ENCODE measurements at regions of chr11 and their contacts with region 1.

Region 1: DNA sequence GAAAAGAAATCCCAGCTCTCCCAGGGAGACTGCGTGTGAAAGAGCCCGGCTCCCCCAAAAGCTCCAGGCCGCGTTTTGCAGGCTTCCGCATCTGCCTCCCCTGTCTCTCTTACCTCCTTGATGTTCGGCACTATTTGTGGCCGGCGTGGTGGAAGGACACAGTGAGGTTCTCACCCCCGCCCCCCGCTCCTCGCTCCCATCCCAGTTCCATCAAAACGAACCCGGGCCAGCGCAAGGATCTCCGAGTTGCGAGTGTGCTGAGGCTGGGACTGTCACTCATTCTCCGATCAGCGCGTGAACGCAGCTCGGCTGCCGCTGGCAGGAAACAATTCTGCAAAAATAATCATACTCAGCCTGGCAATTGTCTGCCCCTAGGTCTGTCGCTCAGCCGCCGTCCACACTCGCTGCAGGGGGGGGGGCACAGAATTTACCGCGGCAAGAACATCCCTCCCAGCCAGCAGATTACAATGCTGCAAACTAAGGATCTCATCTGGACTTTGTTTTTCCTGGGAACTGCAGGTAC is at the start of gene NCAM1:
- DNase-seq: peak; percentile 82 to 95 (median 95)
- ATAC-seq: peak; percentile 75 to 79
- H3K4me3 ChIP-seq: peak within 1 kb of the TSS; percentile 92
- H3K27ac ChIP-seq: peak within 1 kb of the TSS; percentile 75
- H3K4me1 ChIP-seq: no peaks in the 10 kb centered on the region
- H3K27me3 ChIP-seq: no peaks in the 10 kb centered on the region
- total RNA-seq, gene NCAM1: 191 to 303 (median 223) TPM

Region 2: DNA sequence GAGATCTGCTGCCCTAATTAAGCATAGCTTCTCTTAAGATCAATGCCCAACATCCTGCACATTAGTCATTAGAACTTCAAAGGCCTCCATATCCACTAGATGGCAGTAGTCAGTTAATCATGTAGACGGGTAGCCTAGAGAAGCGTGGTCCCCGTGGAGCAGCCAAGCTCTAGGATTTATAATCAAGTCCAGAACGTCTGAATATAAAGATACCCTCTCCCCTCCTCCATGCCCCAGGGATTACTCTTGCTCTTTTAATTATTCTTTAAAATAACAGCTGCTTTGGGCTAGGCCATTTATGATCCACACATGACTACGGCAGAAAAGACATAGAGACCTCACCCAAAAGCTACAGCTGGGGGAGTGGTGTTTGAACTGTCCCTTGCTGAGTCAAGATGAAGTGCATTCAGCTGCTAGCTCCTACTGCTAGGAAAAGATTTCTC is 372.9 kb before region 1 on chr11:
- intact Hi-C with region 1: loop called in 1 of 4 experiments (anchors 10 kb)
- DNase-seq: peak; percentile 61 to 85 (median 73)
- ATAC-seq: peak; percentile 86 to 89
- H3K4me3 ChIP-seq: no peak overlapping the region
- H3K27ac ChIP-seq: no peak overlapping the region
- H3K4me1 ChIP-seq: no peaks in the 10 kb centered on the region
- H3K27me3 ChIP-seq: no peaks in the 10 kb centered on the region

Region 3: GRCh38 chr11:112784323-112785073 is 176.7 kb before region 1 on chr11:
- intact Hi-C with region 1: loop called in 1 of 4 experiments (anchors 10 kb)
- DNase-seq: peak; percentile 86 to 96 (median 95)
- ATAC-seq: peak; percentile 81 to 89
- H3K4me3 ChIP-seq: no peak overlapping the region
- H3K27ac ChIP-seq: peak overlapping the region; percentile 53
- H3K4me1 ChIP-seq: peaks cover 16% of the 10 kb centered on the region
- H3K27me3 ChIP-seq: no peaks in the 10 kb centered on the region

Region 4: GRCh38 chr11:112852143-112852866 is 108.9 kb before region 1 on chr11:
- intact Hi-C with region 1: loop called in 1 of 4 experiments (anchors 10 kb)
- DNase-seq: no peak
- ATAC-seq: peak; percentile 72
- H3K4me3 ChIP-seq: no peak overlapping the region
- H3K27ac ChIP-seq: peak overlapping the region; percentile 75
- H3K4me1 ChIP-seq: peaks cover 1% of the 10 kb centered on the region
- H3K27me3 ChIP-seq: no peaks in the 10 kb centered on the region

Region 5: DNA sequence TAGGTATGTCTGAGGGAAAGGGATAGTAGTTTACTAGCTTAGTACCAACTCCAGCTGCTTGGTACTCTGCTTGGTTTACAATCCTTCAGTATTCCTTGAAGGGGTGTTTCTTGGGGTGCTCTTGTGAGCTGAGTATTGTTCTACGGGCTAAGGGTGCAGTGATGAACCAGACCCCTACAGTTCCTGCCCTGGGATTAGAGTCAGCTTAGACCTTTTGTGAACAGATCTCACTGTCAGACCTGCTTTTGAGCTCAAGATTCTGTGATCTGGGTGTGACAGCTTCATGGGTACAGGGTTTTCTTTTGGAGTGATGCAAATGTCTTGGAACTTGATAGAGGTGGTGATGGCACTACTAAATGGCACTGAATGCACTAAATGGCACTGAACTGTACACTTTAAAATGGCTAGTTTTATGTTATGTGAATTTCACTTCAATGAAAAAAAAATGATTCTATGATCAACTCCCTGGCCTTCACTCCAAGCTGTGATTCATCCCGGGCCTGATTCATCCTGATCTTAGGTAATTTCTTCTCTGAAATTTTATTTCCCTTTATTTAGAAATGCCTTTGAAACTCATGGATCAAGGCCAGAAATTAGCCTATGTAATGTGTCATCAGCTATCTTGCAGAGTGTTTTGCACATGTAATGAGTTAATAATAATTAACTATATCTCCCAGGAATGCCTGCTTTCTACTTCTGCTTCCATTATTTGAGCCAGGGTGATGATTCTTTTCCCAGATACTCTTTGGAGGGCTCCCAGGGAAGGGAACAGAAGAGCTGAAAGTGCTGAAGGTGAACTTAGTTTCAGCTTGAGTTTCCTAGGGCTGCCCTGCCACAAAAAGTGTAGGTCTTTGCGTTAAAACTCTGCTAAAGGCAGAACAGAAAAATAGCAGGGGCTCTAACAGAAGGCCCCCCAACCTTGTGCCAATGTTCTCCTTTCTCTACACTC is 87.9 kb after region 1 on chr11:
- intact Hi-C with region 1: no loop called
- DNase-seq: no peak
- ATAC-seq: no peak
- H3K4me3 ChIP-seq: no peak overlapping the region
- H3K27ac ChIP-seq: no peak overlapping the region
- H3K4me1 ChIP-seq: no peaks in the 10 kb centered on the region
- H3K27me3 ChIP-seq: no peaks in the 10 kb centered on the region

Region 6: GRCh38 chr11:113113801-113114706 is 152.8 kb after region 1 on chr11:
- intact Hi-C with region 1: loop called in 3 of 4 experiments (anchors 5 to 10 kb)
- DNase-seq: peak; percentile 56 to 82 (median 81)
- ATAC-seq: peak; percentile 90 to 96
- H3K4me3 ChIP-seq: no peak overlapping the region
- H3K27ac ChIP-seq: peak overlapping the region; percentile 50
- H3K4me1 ChIP-seq: peaks cover 4% of the 10 kb centered on the region
- H3K27me3 ChIP-seq: no peaks in the 10 kb centered on the region

Region 7: GRCh38 chr11:113289431-113290187 is 328.4 kb after region 1 on chr11:
- intact Hi-C with region 1: loop called in 1 of 4 experiments (anchors 10 kb)
- DNase-seq: peak; percentile 48 to 83 (median 75)
- ATAC-seq: peak; percentile 76 to 82
- H3K4me3 ChIP-seq: no peak overlapping the region
- H3K27ac ChIP-seq: no peak overlapping the region
- H3K4me1 ChIP-seq: no peaks in the 10 kb centered on the region
- H3K27me3 ChIP-seq: no peaks in the 10 kb centered on the region

Measured in right cardiac atrium (tissue), 5 donors.